Gastrocnemius medialis (tissue), 4 donors: ENCODE measurements at regions of chr17 and their contacts with region 1.

Region 1: DNA sequence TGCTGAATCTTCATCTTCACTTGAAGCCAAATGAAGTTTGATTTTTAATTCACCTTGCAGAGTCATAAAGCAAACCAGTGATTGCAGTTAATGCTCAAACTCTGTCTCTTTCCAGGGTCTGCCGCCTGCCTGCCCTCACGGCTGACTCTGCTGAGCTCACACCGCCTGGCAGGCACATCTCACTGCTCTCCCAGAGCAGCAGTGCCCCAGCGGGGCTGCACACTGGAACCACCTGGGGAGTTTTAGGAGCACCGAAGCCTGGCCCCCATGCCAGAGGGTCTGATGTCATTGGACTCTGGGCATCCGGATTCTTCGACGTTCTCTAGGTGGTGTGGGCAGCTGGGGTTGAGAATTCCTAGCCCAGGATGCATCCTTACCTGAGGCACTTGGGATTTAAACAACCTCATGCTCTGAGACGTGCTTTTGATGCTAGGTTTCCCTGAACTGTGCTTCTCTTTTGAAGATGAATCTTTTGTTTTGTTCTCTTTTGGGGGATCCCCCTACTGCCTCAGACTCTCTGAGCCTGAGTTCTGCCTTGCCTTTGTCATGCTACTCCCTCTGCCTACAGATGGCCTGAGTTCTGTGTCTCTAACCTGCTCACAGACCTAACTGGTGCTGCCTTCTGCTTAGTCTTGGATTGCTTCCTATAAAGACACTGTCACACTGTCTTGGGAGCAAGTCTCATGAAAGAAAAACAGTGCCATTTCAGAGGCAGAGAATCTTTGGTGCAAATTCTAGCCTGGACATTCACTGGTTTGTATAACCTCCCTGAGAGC is 438.1 kb upstream of the CCL2 start:
- DNase-seq: no peak
- ATAC-seq: no peak
- H3K4me3 ChIP-seq: no peak overlapping the region
- H3K27ac ChIP-seq: no peak overlapping the region
- H3K4me1 ChIP-seq: no peaks in the 10 kb centered on the region
- H3K27me3 ChIP-seq: peaks cover 0 to 13% (median 0%) of the 10 kb centered on the region in 3 donors
- CTCF ChIP-seq: no peak
- POLR2A ChIP-seq: no peak

Region 2: GRCh38 chr17:33769066-33769465 is 48.0 kb before region 1 on chr17:
- in situ Hi-C with region 1: no loop called
- intact Hi-C with region 1: no loop called
- DNase-seq: no peak
- ATAC-seq: no peak
- H3K4me3 ChIP-seq: no peak overlapping the region
- H3K27ac ChIP-seq: no peak overlapping the region
- H3K4me1 ChIP-seq: no peaks in the 10 kb centered on the region
- H3K27me3 ChIP-seq: peaks cover 0 to 3% (median 0%) of the 10 kb centered on the region in 3 donors
- CTCF ChIP-seq: no peak
- POLR2A ChIP-seq: no peak

Region 3: DNA sequence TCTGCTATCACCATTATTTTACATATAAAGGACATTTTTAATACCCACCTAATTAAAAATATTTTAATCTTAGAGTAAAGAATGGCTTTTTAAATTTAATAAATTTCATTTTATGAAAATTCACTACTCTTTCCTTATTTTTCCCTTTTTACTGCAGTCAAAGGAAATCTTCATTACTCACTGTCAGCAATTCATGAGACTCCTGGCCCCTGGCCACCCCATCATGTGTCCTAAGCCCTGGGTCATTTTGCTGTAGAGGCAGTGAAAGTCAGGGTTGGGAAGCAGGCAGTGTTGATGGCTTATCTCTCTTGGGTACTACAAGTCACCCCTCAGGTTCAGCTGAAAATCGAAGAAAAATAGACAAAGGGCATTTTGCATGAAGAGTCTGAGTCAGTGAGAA is 30.6 kb before region 1 on chr17:
- in situ Hi-C with region 1: loop called in 1 of 4 experiments (anchors 5 kb)
- intact Hi-C with region 1: no loop called
- DNase-seq: peak in 1 of 2 donors; percentile 19
- ATAC-seq: no peak
- H3K4me3 ChIP-seq: no peak overlapping the region
- H3K27ac ChIP-seq: no peak overlapping the region
- H3K4me1 ChIP-seq: no peaks in the 10 kb centered on the region
- H3K27me3 ChIP-seq: no peaks in the 10 kb centered on the region
- CTCF ChIP-seq: no peak
- POLR2A ChIP-seq: no peak

Region 4: DNA sequence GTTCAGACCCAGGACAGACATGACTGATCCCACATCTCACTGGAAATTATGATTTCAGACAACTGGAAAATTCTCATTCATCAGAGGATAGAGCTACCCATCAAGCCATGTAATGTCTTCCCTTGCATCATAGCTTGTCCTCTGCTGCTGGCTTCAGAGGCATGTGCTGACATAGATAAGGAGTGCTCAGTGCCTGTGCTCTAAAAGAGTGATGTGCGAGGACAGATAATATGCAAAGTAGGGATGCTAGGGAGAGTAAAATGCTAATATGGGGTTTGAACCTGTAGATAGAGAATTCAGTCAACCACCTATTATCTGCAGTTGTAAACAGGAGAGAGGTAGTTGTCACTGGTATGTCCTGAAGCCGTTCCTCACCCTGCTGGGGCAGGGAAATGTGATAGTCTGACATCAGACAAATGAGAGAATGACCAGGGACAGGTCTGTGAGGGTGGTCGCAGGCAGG is 88.3 kb after region 1 on chr17:
- in situ Hi-C with region 1: no loop called
- intact Hi-C with region 1: no loop called
- DNase-seq: no peak
- ATAC-seq: no peak
- H3K4me3 ChIP-seq: no peak overlapping the region
- H3K27ac ChIP-seq: no peak overlapping the region
- H3K4me1 ChIP-seq: no peaks in the 10 kb centered on the region
- H3K27me3 ChIP-seq: no peaks in the 10 kb centered on the region
- CTCF ChIP-seq: no peak
- POLR2A ChIP-seq: no peak